Breast epithelium (tissue), 4 donors: ENCODE measurements at regions of chr10 and their contacts with region 1.

Region 1: DNA sequence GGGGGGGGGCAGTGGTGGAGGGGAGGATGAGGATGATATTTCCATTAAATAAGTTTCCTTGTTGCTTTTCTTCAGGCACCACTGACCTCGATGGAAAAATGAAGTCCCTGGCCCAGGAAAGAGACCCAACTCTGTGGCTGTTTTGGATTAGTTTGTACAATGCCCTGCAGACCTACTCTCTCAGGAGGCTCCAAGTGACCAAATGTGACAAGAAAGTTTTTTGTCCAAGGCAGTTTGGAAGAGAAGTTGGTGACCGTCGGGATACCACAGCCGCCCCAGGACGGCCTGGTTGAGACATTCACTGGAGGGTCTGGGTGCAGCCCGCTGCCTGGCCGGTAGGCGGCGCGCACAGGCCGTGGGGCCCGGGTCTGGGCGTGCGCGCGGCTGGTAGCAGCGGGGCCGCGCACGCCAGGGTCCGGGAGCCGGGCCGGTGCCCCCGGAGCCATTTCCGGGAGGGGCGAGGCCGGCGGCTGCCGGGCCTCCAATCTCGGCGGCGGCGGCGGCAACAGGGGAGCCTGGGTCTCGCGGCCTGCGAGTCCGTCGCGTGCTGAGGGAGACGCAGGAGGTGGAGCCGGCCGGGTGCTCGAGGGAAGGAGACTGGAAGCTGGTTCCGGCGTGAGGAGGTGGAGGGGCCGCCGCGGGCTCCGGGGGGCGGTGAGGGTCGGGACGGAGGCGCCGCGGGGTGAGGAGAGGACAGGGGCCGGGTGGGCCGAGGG is at the start of gene SGPL1:
- DNase-seq: peak; percentile 76 to 87
- H3K4me3 ChIP-seq: peak within 1 kb of the TSS; percentile 63 to 87 (median 66)
- H3K27ac ChIP-seq: peak within 1 kb of the TSS; percentile 92 to 96
- H3K4me1 ChIP-seq: no peaks in the 10 kb centered on the region
- H3K27me3 ChIP-seq: no peaks in the 10 kb centered on the region
- CTCF ChIP-seq: peak; percentile 74 to 99 (median 82)
- POLR2A ChIP-seq: no peak
- total RNA-seq, gene SGPL1: 31.0 to 52.2 (median 36.4) TPM

Region 2: DNA sequence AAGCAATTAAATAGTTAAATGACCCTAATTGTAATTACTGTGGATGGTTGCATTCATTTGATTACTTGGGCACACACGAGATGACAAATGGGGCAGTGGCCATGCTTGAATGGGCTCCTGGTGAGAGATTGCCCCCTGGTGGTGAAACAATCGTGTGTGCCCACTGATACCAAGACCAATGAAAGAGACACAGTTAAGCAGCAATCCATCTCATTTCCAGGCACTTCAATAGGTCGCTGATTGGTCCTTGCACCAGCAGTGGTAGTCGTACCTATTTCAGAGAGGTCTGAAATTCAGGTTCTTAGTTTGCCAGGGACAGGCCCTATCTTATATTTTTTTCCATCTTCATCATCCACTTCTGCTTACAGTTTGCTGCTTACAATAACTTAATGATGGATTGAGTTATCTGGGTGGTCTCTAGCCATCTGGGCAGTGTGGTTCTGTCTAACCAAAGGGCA is 64.4 kb after region 1 on chr10:
- intact Hi-C with region 1: loop called (anchors 10 kb)
- DNase-seq: peak; percentile 73 to 75
- H3K4me3 ChIP-seq: no peak overlapping the region
- H3K27ac ChIP-seq: no peak overlapping the region
- H3K4me1 ChIP-seq: no peaks in the 10 kb centered on the region
- H3K27me3 ChIP-seq: no peaks in the 10 kb centered on the region
- CTCF ChIP-seq: peak; percentile 80 to 91 (median 89)
- POLR2A ChIP-seq: no peak

Region 3: GRCh38 chr10:71531485-71532446 is 716.1 kb after region 1 on chr10:
- intact Hi-C with region 1: no loop called
- DNase-seq: no peak
- H3K4me3 ChIP-seq: no peak overlapping the region
- H3K27ac ChIP-seq: peak overlapping the region in 1 of 2 donors; percentile 43
- H3K4me1 ChIP-seq: no peaks in the 10 kb centered on the region
- H3K27me3 ChIP-seq: no peaks in the 10 kb centered on the region
- CTCF ChIP-seq: no peak
- POLR2A ChIP-seq: no peak